ENCODE measurements at regions of chr1 and their contacts with region 1.

Region 1: DNA sequence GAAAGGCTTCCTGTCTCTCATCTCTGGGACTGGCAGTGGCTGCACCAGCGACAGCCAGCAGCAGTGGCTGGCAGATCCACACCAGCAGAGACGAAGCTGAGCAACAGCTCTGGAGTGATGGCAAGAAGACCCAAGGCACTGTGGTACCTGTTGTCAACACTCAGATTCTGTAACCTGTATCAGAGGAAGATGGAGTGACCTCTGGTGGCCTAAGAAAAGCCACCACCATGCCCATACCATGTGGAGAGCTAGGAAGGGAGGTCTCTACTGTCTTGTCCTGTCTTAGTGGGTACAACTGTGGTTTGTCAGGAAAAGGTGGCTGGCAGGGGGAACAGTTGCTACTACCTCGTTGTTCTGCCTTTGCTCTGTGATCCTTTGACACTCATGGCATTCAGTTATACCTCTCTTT is 22.5 kb upstream of the RHBDL2 start:
- DNase-seq: peak; percentile 13
- ATAC-seq: peak; percentile 90
- H3K4me3 Mint-ChIP-seq: no peak overlapping the region
- H3K27ac Mint-ChIP-seq: no peak overlapping the region
- H3K4me1 Mint-ChIP-seq: peaks cover 2% of the 10 kb centered on the region; the same call in 1 of the 2 replicates
- H3K27me3 Mint-ChIP-seq: no peaks in the 10 kb centered on the region
- CTCF ChIP-seq: no peak

Region 2: GRCh38 chr1:38758820-38759219 is 205.3 kb before region 1 on chr1:
- CTCF ChIA-PET with region 1: no interaction called
- POLR2A ChIA-PET with region 1: no interaction called
- DNase-seq: no peak
- ATAC-seq: no peak
- H3K4me3 Mint-ChIP-seq: no peak overlapping the region
- H3K27ac Mint-ChIP-seq: no peak overlapping the region
- H3K4me1 Mint-ChIP-seq: no peaks in the 10 kb centered on the region; the same call in 1 of the 2 replicates
- H3K27me3 Mint-ChIP-seq: peaks cover 3% of the 10 kb centered on the region
- CTCF ChIP-seq: no peak

Region 3: GRCh38 chr1:38891753-38892152 is 72.4 kb before region 1 on chr1:
- CTCF ChIA-PET with region 1: interaction called, 13 read pairs
- POLR2A ChIA-PET with region 1: no interaction called
- DNase-seq: peak; percentile 59
- ATAC-seq: peak; percentile 99
- H3K4me3 Mint-ChIP-seq: no peak overlapping the region
- H3K27ac Mint-ChIP-seq: no peak overlapping the region
- H3K4me1 Mint-ChIP-seq: peaks cover 6% of the 10 kb centered on the region
- H3K27me3 Mint-ChIP-seq: no peaks in the 10 kb centered on the region; the same call in 1 of the 2 replicates
- CTCF ChIP-seq: no peak

Region 4: DNA sequence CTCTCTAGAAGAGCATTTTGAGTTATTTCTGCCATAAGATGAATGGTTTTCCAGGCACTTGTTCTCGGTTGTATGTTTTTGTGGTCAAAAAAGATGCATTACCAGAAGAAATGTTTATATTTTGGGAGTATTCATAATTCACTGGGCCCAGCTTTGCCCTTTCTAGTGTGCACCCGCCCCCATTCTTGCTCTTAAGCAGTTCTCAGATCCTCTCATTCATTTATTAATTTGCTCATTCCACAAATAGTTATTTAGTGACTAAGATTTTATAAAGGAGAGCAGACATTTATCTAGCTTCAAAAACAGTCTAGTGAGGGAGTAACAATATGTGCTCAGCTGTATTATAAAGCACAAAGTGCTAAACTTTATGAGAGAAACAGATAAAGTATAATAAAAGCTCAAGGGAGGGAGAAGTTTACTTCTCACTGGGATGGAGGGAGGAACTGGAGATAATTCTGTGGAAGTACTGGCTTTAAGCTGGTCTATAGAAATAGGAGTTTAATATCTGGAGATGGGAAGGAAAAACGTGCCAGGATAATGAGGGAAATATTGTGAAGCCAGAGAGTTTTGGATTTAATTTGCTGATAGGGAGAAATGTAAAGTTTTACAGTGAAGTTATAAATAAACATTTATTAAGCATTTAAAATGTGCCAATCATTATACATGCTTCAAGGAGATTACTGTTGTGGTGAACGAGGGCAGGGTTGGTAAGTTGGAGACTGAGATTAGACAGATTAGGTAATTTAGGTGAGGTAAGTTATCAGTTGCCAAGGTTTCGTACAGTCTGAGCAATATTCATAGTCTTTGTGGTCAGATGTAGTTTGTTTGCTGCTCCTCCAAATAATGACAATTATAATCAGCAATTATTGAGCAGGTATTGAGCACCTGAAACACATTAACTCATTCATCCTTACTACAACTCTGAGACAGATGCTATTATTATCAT is 231.3 kb after region 1 on chr1:
- CTCF ChIA-PET with region 1: no interaction called
- POLR2A ChIA-PET with region 1: no interaction called
- DNase-seq: no peak
- ATAC-seq: no peak
- H3K4me3 Mint-ChIP-seq: no peak overlapping the region
- H3K27ac Mint-ChIP-seq: peak overlapping the region; percentile 91
- H3K4me1 Mint-ChIP-seq: peaks cover 54% of the 10 kb centered on the region
- H3K27me3 Mint-ChIP-seq: no peaks in the 10 kb centered on the region
- CTCF ChIP-seq: no peak